ENCODE measurements at regions of chr6 and their contacts with region 1.

Region 1: GRCh38 chr6:23690453-23691430 is 435.3 kb upstream of the NRSN1 start:
- DNase-seq: no peak
- H3K4me3 ChIP-seq: no peak overlapping the region
- H3K27ac ChIP-seq: no peak overlapping the region
- H3K4me1 ChIP-seq: no peaks in the 10 kb centered on the region
- H3K27me3 ChIP-seq: no peaks in the 10 kb centered on the region
- CTCF ChIP-seq: no peak
- POLR2A ChIP-seq: no peak

Region 2: DNA sequence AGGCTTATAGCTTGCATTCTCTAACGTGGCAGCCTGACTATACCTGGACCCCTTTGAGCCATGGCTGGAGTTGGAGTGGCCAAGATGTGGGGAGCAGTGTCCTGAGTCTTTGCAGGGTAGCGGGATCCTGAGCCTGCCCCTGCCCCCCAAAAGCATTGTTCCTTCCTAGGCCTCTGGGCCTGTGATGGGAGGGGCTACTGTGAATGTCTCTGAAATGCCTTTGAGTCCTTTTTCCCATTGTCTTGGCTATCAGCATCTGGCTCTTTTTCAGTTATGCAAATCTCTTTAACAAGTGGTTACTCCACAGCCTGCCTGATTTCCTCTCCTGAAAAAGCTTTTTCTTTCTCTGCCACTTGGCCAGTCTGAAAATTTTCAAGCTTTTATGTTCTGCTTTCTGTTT is 1376.9 kb before region 1 on chr6:
- intact Hi-C with region 1: loop called (anchors 5 kb)
- DNase-seq: no peak
- H3K4me3 ChIP-seq: no peak overlapping the region
- H3K27ac ChIP-seq: no peak overlapping the region
- H3K4me1 ChIP-seq: no peaks in the 10 kb centered on the region
- H3K27me3 ChIP-seq: no peaks in the 10 kb centered on the region
- CTCF ChIP-seq: no peak
- POLR2A ChIP-seq: no peak

Measured in breast epithelium (tissue), 4 donors.